Testis (tissue), 5 donors: ENCODE measurements at regions of chr1 and their contacts with region 1.

Region 1: GRCh38 chr1:64826991-64827390 is 82.1 kb downstream of the RAVER2 start:
- DNase-seq: no peak
- H3K4me3 ChIP-seq: no peak overlapping the region
- H3K27ac ChIP-seq: no peak overlapping the region
- H3K4me1 ChIP-seq: no peaks in the 10 kb centered on the region
- H3K27me3 ChIP-seq: no peaks in the 10 kb centered on the region
- CTCF ChIP-seq: no peak
- POLR2A ChIP-seq: no peak

Region 2: GRCh38 chr1:64505232-64505943 is 321.6 kb before region 1 on chr1:
- intact Hi-C with region 1: no loop called
- DNase-seq: peak; percentile 24
- H3K4me3 ChIP-seq: peak overlapping the region; percentile 41 to 58
- H3K27ac ChIP-seq: no peak overlapping the region
- H3K4me1 ChIP-seq: peaks cover 16% of the 10 kb centered on the region
- H3K27me3 ChIP-seq: no peaks in the 10 kb centered on the region
- CTCF ChIP-seq: no peak
- POLR2A ChIP-seq: no peak

Region 3: GRCh38 chr1:64686828-64687724 is 139.9 kb before region 1 on chr1:
- intact Hi-C with region 1: loop called (anchors 5 kb)
- DNase-seq: no peak
- H3K4me3 ChIP-seq: no peak overlapping the region
- H3K27ac ChIP-seq: no peak overlapping the region
- H3K4me1 ChIP-seq: no peaks in the 10 kb centered on the region
- H3K27me3 ChIP-seq: no peaks in the 10 kb centered on the region
- CTCF ChIP-seq: peak; percentile 43 to 83 (median 76)
- POLR2A ChIP-seq: no peak

Region 4: DNA sequence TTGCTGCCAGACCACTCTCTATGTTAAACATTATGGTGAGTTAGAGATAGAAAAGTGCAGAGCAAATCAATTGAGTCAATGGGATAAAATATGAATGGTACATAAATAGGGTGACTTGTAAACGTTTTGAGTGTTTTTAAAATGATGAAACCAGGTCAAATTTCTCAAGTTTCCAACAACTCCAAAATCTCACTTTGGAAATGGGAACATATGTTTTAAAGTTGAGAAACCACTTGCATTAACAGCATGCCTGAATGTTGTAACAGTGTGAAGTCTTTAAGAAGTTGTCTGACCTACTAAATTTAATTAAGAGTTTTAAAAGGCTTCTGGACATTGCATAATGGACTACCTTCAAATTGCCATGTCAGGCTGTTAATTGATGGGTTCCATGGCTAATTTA is 115.7 kb before region 1 on chr1:
- intact Hi-C with region 1: no loop called
- DNase-seq: no peak
- H3K4me3 ChIP-seq: no peak overlapping the region
- H3K27ac ChIP-seq: no peak overlapping the region
- H3K4me1 ChIP-seq: no peaks in the 10 kb centered on the region
- H3K27me3 ChIP-seq: no peaks in the 10 kb centered on the region
- CTCF ChIP-seq: no peak
- POLR2A ChIP-seq: no peak

Region 5: GRCh38 chr1:64877151-64877550 is 50.2 kb after region 1 on chr1:
- intact Hi-C with region 1: no loop called
- DNase-seq: no peak
- H3K4me3 ChIP-seq: no peak overlapping the region
- H3K27ac ChIP-seq: no peak overlapping the region
- H3K4me1 ChIP-seq: no peaks in the 10 kb centered on the region
- H3K27me3 ChIP-seq: no peaks in the 10 kb centered on the region
- CTCF ChIP-seq: no peak
- POLR2A ChIP-seq: no peak